CD4-positive, alpha-beta T cell (primary cell): ENCODE measurements at regions of chr2 and their contacts with region 1.

Region 1: GRCh38 chr2:73176881-73177644 is 25.3 kb upstream of the NOTO start:
- DNase-seq: peak; percentile 77 to 95 (median 86)
- ATAC-seq: peak; percentile 92
- H3K4me3 ChIP-seq: peak overlapping the region; percentile 70
- H3K4me3 Mint-ChIP-seq: peak overlapping the region; percentile 92
- H3K27ac ChIP-seq: no peak overlapping the region
- H3K27ac Mint-ChIP-seq: no peak overlapping the region
- H3K4me1 ChIP-seq: peaks cover 32% of the 10 kb centered on the region
- H3K4me1 Mint-ChIP-seq: peaks cover 15% of the 10 kb centered on the region
- H3K27me3 ChIP-seq: peaks cover 20 to 43% of the 10 kb centered on the region in 2 experiments
- H3K27me3 Mint-ChIP-seq: peaks cover 46% of the 10 kb centered on the region
- CTCF ChIP-seq: peak; percentile 98

Region 2: GRCh38 chr2:72825241-72826155 is 351.6 kb before region 1 on chr2 and contains the start of gene EXOC6B:
- CTCF ChIA-PET with region 1: no interaction called
- POLR2A ChIA-PET with region 1: no interaction called
- intact Hi-C with region 1: loop called in 1 of 2 experiments (anchors 5 kb)
- DNase-seq: peak; percentile 64 to 92 (median 86)
- ATAC-seq: peak; percentile 90
- H3K4me3 ChIP-seq: peak within 1 kb of the TSS; percentile 74
- H3K4me3 Mint-ChIP-seq: peak within 1 kb of the TSS; percentile 94
- H3K27ac ChIP-seq: no peak within 1 kb of the TSS
- H3K27ac Mint-ChIP-seq: peak within 1 kb of the TSS; percentile 78
- H3K4me1 ChIP-seq: peaks cover 12% of the 10 kb centered on the region
- H3K4me1 Mint-ChIP-seq: peaks cover 48% of the 10 kb centered on the region
- H3K27me3 ChIP-seq: peaks cover 0 to 4% of the 10 kb centered on the region in 2 experiments
- H3K27me3 Mint-ChIP-seq: peaks cover 8% of the 10 kb centered on the region
- CTCF ChIP-seq: no peak
- total RNA-seq, gene EXOC6B: 16.9 to 17.5 TPM

Region 3: DNA sequence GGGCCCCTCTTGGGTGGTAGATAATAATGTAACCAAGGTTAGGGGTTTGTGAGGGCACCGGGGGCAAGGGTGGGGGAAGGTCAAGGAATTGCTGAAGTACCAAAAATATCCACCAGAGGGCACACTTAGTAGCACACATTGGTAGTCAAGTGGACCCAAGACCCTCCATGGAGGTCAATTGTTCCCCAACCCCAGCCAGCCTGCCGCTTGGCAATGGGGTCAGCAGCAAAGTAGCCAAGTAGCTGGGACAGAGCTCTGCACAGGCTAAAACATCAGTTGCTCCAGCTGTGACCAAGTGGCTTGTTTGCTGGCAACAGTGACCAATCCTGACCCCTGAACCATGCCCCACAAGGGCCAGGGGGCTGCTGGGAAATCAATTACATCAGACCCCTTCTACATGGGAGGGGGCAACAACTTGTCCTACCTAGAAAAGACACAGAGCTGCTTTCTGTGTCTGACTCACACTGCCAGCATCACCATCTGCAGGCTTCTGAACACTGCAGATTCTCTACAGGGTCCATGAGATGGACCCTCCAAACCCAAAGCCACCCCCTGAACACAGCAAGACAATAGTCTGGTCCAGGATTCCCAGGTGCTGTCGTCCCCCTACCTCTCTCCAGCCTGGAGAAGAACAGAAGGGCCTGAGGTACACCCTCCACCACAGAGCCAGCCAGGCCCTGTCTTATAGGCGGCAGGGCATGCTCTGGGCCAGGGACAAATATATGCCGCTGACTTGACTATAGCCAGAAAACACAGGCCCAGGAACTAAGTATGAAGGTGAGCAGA is 183.7 kb before region 1 on chr2:
- CTCF ChIA-PET with region 1: interaction called, 20 read pairs
- POLR2A ChIA-PET with region 1: no interaction called
- intact Hi-C with region 1: loop called (anchors 1 kb)
- DNase-seq: peak in 12 of 14 experiments; percentile 6 to 76 (median 36)
- ATAC-seq: peak; percentile 49
- H3K4me3 ChIP-seq: no peak overlapping the region
- H3K4me3 Mint-ChIP-seq: no peak overlapping the region
- H3K27ac ChIP-seq: no peak overlapping the region
- H3K27ac Mint-ChIP-seq: no peak overlapping the region
- H3K4me1 ChIP-seq: no peaks in the 10 kb centered on the region
- H3K4me1 Mint-ChIP-seq: no peaks in the 10 kb centered on the region
- H3K27me3 ChIP-seq: no peaks in the 10 kb centered on the region
- H3K27me3 Mint-ChIP-seq: no peaks in the 10 kb centered on the region
- CTCF ChIP-seq: peak; percentile 88

Region 4: GRCh38 chr2:73085691-73086360 is 91.2 kb before region 1 on chr2:
- CTCF ChIA-PET with region 1: interaction called, 30 read pairs
- POLR2A ChIA-PET with region 1: no interaction called
- intact Hi-C with region 1: loop called (anchors 1 kb)
- DNase-seq: peak; percentile 73 to 89 (median 78)
- ATAC-seq: peak; percentile 96
- H3K4me3 ChIP-seq: no peak overlapping the region
- H3K4me3 Mint-ChIP-seq: no peak overlapping the region
- H3K27ac ChIP-seq: no peak overlapping the region
- H3K27ac Mint-ChIP-seq: no peak overlapping the region
- H3K4me1 ChIP-seq: peaks cover 3% of the 10 kb centered on the region
- H3K4me1 Mint-ChIP-seq: no peaks in the 10 kb centered on the region
- H3K27me3 ChIP-seq: no peaks in the 10 kb centered on the region
- H3K27me3 Mint-ChIP-seq: no peaks in the 10 kb centered on the region
- CTCF ChIP-seq: peak; percentile 89

Region 5: GRCh38 chr2:73134471-73134870 is 42.6 kb before region 1 on chr2:
- CTCF ChIA-PET with region 1: no interaction called
- POLR2A ChIA-PET with region 1: no interaction called
- intact Hi-C with region 1: no loop called
- DNase-seq: no peak
- ATAC-seq: no peak
- H3K4me3 ChIP-seq: no peak overlapping the region
- H3K4me3 Mint-ChIP-seq: no peak overlapping the region
- H3K27ac ChIP-seq: no peak overlapping the region
- H3K27ac Mint-ChIP-seq: no peak overlapping the region
- H3K4me1 ChIP-seq: no peaks in the 10 kb centered on the region
- H3K4me1 Mint-ChIP-seq: no peaks in the 10 kb centered on the region
- H3K27me3 ChIP-seq: no peaks in the 10 kb centered on the region
- H3K27me3 Mint-ChIP-seq: peaks cover 4% of the 10 kb centered on the region
- CTCF ChIP-seq: no peak

Region 6: GRCh38 chr2:73163483-73164367 is 13.3 kb before region 1 on chr2:
- CTCF ChIA-PET with region 1: interaction called, 19 read pairs
- POLR2A ChIA-PET with region 1: no interaction called
- intact Hi-C with region 1: no loop called
- DNase-seq: peak; percentile 27 to 80 (median 58)
- ATAC-seq: peak; percentile 79
- H3K4me3 ChIP-seq: no peak overlapping the region
- H3K4me3 Mint-ChIP-seq: no peak overlapping the region
- H3K27ac ChIP-seq: no peak overlapping the region
- H3K27ac Mint-ChIP-seq: no peak overlapping the region
- H3K4me1 ChIP-seq: no peaks in the 10 kb centered on the region
- H3K4me1 Mint-ChIP-seq: no peaks in the 10 kb centered on the region
- H3K27me3 ChIP-seq: no peaks in the 10 kb centered on the region
- H3K27me3 Mint-ChIP-seq: peaks cover 16% of the 10 kb centered on the region
- CTCF ChIP-seq: peak; percentile 82

Region 7: DNA sequence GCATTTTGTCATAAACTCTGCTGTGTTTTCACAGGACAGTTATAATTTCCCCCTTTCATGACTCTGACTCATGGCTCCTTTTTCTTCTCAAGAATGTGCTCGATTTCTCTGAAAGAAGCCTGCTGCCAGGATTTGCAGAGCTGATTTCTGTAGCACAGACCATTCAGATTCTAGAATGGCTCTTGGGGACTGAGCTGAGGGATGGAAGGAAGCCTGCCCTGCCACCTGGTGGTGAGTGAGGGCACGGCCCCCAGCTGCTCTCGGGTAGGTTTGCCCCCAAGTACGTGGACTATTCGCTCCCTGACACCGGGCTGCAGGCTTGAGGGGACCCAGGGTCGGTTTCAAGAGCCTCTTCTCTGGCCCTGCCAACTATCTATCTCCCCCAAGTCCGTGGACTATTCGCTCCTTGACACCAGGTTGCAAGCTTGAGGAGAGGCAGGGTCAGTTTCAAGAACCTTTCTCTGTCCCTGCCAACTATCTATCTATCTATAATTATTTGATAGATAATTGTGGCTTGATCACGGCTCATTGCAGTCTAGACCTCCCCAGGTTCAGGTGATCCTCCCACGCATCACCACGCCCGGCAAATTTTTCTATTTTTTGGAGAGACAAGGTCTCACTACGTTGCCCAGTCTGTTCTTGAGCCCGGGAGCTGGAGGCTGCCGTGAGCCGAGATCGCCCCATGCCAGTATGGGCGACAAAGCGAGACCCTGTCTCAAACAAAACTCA is 35.5 kb after region 1 on chr2:
- CTCF ChIA-PET with region 1: interaction called, 52 read pairs
- POLR2A ChIA-PET with region 1: interaction called, 13 read pairs
- intact Hi-C with region 1: loop called (anchors 1 to 2 kb)
- DNase-seq: peak; percentile 56 to 86 (median 64)
- ATAC-seq: peak; percentile 59
- H3K4me3 ChIP-seq: no peak overlapping the region
- H3K4me3 Mint-ChIP-seq: peak overlapping the region; percentile 84
- H3K27ac ChIP-seq: no peak overlapping the region
- H3K27ac Mint-ChIP-seq: peak overlapping the region; percentile 81
- H3K4me1 ChIP-seq: peaks cover 32% of the 10 kb centered on the region
- H3K4me1 Mint-ChIP-seq: peaks cover 37% of the 10 kb centered on the region
- H3K27me3 ChIP-seq: no peaks in the 10 kb centered on the region
- H3K27me3 Mint-ChIP-seq: peaks cover 23% of the 10 kb centered on the region
- CTCF ChIP-seq: peak; percentile 85